ENCODE measurements at regions of chr9 and their contacts with region 1.

Region 1: DNA sequence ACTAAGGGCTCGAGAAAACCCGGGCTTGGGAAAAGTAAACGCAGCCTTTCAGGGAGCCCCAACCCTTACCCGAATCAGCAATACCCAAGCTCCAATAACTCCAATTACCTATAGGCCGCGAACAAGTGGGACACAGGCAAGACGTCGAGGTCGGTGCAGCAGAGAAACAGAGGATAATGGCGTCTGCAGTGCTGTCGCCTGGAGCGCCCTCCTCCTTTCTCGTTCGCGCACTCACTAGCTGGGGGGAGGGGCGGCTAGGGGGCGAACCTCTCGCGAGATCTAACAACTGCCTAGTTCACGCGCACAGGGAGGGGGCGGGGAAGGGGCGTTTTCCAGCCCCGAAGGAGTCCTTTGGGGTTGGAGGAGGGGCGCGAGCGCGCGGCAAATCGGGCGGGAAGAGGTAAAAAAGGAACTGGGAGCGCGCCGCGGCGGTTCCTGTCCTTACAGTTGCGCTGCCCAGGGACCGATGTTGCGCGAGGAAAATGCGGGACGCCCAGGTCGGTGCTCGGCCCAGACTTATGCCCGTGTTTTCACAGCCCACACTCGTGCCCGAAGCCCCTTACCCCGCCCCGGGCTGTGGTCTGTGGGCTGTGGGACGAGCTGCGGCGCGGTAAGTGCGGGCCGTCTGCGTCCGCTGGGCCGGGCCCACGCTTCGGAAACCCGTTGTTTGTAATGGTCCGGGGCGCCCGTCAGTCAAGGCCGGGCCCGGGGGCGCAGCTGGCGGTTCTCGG is at the start of gene RMI1:
- DNase-seq: peak; percentile 96
- ATAC-seq: peak; percentile 70
- H3K4me3 Mint-ChIP-seq: peak within 1 kb of the TSS; percentile 100
- H3K27ac Mint-ChIP-seq: peak within 1 kb of the TSS; percentile 92
- H3K4me1 Mint-ChIP-seq: peaks cover 38% of the 10 kb centered on the region
- H3K27me3 Mint-ChIP-seq: no peaks in the 10 kb centered on the region
- total RNA-seq, gene RMI1: 19.0 to 19.2 TPM

Region 2: GRCh38 chr9:83707768-83708514 is 272.6 kb before region 1 on chr9 and contains the start of gene UBQLN1:
- POLR2A ChIA-PET with region 1: interaction called, 17 read pairs
- DNase-seq: peak; percentile 94
- ATAC-seq: peak; percentile 86
- H3K4me3 Mint-ChIP-seq: peak within 1 kb of the TSS; percentile 90
- H3K27ac Mint-ChIP-seq: peak within 1 kb of the TSS; percentile 100
- H3K4me1 Mint-ChIP-seq: peaks cover 30% of the 10 kb centered on the region
- H3K27me3 Mint-ChIP-seq: no peaks in the 10 kb centered on the region
- total RNA-seq, gene UBQLN1: 87.9 to 108 TPM

Region 3: DNA sequence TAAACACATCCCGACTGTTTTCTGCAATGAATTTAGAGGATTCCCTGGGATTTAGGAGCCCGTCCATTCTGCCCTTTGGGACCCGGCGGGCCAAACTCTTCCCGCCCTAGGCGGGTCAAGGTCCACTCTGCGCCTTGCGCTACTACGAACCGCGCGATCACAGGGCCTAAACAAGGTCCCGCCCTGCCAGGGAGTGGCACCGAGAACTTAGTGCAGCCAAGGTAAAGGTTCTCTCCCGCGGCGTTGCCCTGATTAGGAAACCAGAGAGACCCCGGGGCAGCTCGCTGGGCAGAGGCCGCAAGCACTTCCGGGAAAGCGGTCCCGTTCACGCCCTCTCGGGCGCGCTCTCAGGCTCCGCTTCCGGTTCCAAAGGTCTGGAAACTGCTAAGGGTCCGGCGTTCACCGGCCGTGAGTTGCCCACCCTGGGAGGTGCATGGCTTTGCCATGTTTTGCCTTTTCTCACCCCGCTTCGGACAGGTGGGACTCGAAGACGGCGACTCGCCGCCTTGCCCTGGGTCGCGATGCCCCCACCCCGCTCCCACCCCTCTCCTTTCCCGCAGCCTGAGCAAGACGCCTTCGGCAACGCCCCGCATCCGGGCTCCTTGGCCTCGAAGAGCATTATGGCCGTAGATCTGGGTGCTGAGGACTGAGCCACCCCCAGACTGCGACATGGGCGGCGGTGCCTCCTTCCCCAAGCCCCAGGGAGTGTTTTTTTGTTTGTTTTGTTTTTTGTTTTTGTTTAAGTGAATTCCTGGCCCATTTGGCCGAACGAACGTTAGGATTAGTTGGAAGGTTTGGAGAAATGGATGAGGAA is 23.9 kb before region 1 on chr9:
- POLR2A ChIA-PET with region 1: interaction called, 38 read pairs
- DNase-seq: peak; percentile 78
- ATAC-seq: peak; percentile 85
- H3K4me3 Mint-ChIP-seq: peak overlapping the region; percentile 96
- H3K27ac Mint-ChIP-seq: peak overlapping the region; percentile 91
- H3K4me1 Mint-ChIP-seq: peaks cover 8% of the 10 kb centered on the region
- H3K27me3 Mint-ChIP-seq: no peaks in the 10 kb centered on the region

Region 4: GRCh38 chr9:84002344-84002743 is 21.8 kb after region 1 on chr9:
- POLR2A ChIA-PET with region 1: interaction called, 15 read pairs
- DNase-seq: no peak
- ATAC-seq: peak; percentile 93
- H3K4me3 Mint-ChIP-seq: peak overlapping the region; percentile 41
- H3K27ac Mint-ChIP-seq: peak overlapping the region; percentile 49
- H3K4me1 Mint-ChIP-seq: peaks cover 8% of the 10 kb centered on the region
- H3K27me3 Mint-ChIP-seq: no peaks in the 10 kb centered on the region

Region 5: GRCh38 chr9:84293001-84293798 is 312.6 kb after region 1 on chr9:
- POLR2A ChIA-PET with region 1: interaction called, 12 read pairs
- DNase-seq: peak; percentile 40
- ATAC-seq: peak; percentile 69
- H3K4me3 Mint-ChIP-seq: peak overlapping the region; percentile 85
- H3K27ac Mint-ChIP-seq: peak overlapping the region; percentile 99
- H3K4me1 Mint-ChIP-seq: peaks cover 57% of the 10 kb centered on the region
- H3K27me3 Mint-ChIP-seq: no peaks in the 10 kb centered on the region

Measured in activated naive CD8-positive, alpha-beta T cell treated with anti-CD3 and anti-CD28 coated beads, Interleukin-2, amount 10 ng/mL, durations not matched to agents 7 days and 5 days (primary cell).